Panc1 (cell line): ENCODE measurements at regions of chr2 and their contacts with region 1.

Region 1: GRCh38 chr2:61910603-61911002 is 5.1 kb downstream of the COMMD1 start:
- DNase-seq: no peak
- ATAC-seq: no peak
- H3K4me3 ChIP-seq: no peak overlapping the region
- H3K27ac ChIP-seq: no peak overlapping the region
- H3K4me1 ChIP-seq: peaks cover 13% of the 10 kb centered on the region; the same call in 1 of the 2 replicates
- H3K27me3 ChIP-seq: no peaks in the 10 kb centered on the region
- CTCF ChIP-seq: peak; percentile 70

Region 2: DNA sequence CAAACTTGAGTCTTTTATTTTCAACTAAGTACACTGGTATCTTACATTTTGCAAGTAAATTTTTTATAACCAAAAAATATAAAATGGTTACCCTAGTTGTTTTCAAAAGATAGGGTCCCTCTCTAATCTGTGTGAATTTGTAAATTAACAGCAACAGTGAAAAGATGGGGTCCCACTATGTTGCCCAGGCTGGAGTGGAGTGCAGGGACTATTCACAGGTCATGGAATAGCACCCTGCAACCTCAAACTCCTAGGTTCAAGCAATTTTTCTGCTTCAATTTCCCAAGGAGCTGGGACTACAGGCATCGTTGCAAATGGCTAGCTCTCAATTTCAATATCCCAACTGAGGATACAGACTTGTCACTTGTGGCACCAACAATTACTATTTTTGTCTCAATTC is 34.2 kb before region 1 on chr2:
- CTCF ChIA-PET with region 1: interaction called, 11 read pairs
- POLR2A ChIA-PET with region 1: no interaction called
- in situ Hi-C with region 1: no loop called
- intact Hi-C with region 1: no loop called
- DNase-seq: no peak
- ATAC-seq: no peak
- H3K4me3 ChIP-seq: no peak overlapping the region
- H3K27ac ChIP-seq: no peak overlapping the region
- H3K4me1 ChIP-seq: no peaks in the 10 kb centered on the region
- H3K27me3 ChIP-seq: no peaks in the 10 kb centered on the region
- CTCF ChIP-seq: no peak

Region 3: DNA sequence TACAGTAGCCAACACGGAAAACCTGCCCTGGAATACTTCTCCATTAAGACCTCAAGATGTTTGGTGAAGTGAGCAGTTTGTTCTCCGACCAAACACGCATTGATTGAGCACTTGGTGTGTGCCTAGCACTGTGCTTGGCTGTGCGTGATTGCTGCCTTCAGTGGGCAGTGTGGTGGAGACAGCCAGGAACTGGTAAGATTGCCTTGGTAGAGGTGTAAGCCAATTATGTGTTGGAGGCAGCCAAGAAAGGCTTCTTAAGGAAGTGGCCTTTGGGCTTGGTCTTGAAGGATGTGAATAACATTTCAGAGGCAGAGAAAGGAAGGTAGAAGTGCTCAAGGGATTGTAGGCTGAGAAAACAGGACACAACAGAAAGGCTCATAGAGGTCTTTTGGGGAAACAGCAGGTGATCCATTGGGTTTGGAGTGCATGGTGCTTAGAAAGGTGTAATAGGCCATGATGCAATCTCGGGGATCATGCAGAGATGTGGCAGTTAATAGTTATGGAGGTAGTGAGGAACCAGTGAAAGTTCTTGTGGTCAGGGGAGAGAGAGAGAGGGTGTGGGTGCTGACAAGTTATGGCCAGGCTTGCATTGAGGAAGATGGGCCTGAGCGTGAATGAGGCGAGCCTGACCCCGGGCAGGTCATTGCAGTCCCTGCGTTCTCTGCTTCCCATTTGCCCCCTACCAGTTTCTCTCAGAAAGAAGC is 291.6 kb after region 1 on chr2:
- CTCF ChIA-PET with region 1: no interaction called
- POLR2A ChIA-PET with region 1: no interaction called
- in situ Hi-C with region 1: no loop called
- intact Hi-C with region 1: no loop called
- DNase-seq: no peak
- ATAC-seq: no peak
- H3K4me3 ChIP-seq: no peak overlapping the region
- H3K27ac ChIP-seq: no peak overlapping the region
- H3K4me1 ChIP-seq: peaks cover 9% of the 10 kb centered on the region; the same call in 1 of the 2 replicates
- H3K27me3 ChIP-seq: no peaks in the 10 kb centered on the region
- CTCF ChIP-seq: no peak